AG04449 (cell line): ENCODE measurements at regions of chr2 and their contacts with region 1.

Region 1: GRCh38 chr2:11129598-11130449 is 25.4 kb upstream of the SLC66A3 start:
- DNase-seq: no peak
- H3K4me3 ChIP-seq: peak overlapping the region; percentile 39
- CTCF ChIP-seq: no peak

Region 2: DNA sequence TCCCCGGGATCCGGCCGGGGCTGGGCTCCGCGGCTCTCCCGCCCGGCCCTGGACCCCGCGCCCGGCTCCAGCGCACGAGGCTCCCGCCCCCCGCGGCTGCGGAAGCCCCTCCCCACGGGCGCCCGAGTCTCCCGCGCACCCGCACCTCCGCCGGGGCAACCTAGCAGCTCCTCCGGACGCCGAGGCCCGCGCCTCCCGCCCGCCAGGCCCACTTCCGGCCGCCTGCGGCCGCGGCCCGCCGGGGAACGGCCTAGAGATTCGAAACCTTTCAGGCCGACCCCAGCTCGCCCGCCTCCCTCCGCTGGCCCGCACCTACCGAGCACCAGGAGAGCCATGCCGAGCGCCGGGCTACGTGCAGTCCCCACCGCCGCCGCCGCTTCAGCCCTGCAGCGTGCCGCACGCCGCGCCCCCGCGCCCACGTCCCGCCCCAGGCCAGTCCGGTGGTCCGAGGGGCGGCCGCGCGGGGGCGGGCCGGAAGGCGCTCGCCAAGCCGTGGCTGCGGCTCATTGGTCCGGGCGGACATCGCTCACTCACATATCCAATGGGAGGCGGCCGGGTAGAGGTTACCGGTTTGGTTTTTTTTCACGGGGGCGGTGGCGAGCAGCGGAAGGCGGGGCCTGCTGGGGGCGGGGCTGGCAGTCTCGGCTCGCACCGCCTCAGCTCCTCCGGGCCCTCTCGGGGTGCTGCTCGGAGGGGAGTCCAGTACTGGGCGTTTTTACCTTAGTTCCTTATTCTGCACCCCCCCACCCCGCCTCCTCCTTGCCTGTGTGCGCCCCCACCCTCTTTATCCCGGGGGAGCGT is 317.3 kb before region 1 on chr2 and contains the start of gene PDIA6:
- CTCF ChIA-PET with region 1: interaction called, 11 read pairs
- POLR2A ChIA-PET with region 1: no interaction called
- DNase-seq: peak; percentile 62
- H3K4me3 ChIP-seq: peak within 1 kb of the TSS; percentile 74
- CTCF ChIP-seq: no peak

Region 3: DNA sequence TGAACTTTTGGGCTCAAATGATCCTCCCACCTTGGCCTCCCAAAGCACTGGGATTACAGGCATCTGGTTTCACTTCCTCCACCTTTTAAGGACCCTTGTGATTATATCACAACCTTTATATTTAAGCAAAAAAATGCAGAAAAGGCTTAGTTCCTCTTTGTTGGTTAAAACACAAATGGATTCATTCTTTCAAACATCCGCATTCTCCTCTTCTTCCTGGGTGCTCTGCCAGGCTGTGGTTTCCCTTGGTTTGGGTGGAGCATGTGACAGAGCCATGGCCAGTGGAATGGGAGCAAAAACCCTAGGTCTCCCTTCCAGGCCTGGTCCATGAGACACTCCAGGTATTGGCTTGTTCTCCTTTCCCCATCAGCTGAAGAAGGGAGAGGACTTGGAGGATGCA is 15.5 kb after region 1 on chr2:
- CTCF ChIA-PET with region 1: interaction called, 53 read pairs
- POLR2A ChIA-PET with region 1: interaction called, 3 read pairs
- DNase-seq: no peak
- H3K4me3 ChIP-seq: no peak overlapping the region
- CTCF ChIP-seq: no peak

Region 4: GRCh38 chr2:11203480-11203879 is 73.7 kb after region 1 on chr2:
- CTCF ChIA-PET with region 1: interaction called, 29 read pairs
- POLR2A ChIA-PET with region 1: no interaction called
- DNase-seq: no peak
- H3K4me3 ChIP-seq: no peak overlapping the region
- CTCF ChIP-seq: no peak

Region 5: GRCh38 chr2:11375025-11375688 is 245.3 kb after region 1 on chr2:
- CTCF ChIA-PET with region 1: interaction called, 12 read pairs
- POLR2A ChIA-PET with region 1: no interaction called
- DNase-seq: no peak
- H3K4me3 ChIP-seq: no peak overlapping the region
- CTCF ChIP-seq: no peak

Region 6: GRCh38 chr2:11457935-11458334 is 328.1 kb after region 1 on chr2:
- CTCF ChIA-PET with region 1: interaction called, 19 read pairs
- POLR2A ChIA-PET with region 1: no interaction called
- DNase-seq: no peak
- H3K4me3 ChIP-seq: no peak overlapping the region
- CTCF ChIP-seq: no peak

Region 7: DNA sequence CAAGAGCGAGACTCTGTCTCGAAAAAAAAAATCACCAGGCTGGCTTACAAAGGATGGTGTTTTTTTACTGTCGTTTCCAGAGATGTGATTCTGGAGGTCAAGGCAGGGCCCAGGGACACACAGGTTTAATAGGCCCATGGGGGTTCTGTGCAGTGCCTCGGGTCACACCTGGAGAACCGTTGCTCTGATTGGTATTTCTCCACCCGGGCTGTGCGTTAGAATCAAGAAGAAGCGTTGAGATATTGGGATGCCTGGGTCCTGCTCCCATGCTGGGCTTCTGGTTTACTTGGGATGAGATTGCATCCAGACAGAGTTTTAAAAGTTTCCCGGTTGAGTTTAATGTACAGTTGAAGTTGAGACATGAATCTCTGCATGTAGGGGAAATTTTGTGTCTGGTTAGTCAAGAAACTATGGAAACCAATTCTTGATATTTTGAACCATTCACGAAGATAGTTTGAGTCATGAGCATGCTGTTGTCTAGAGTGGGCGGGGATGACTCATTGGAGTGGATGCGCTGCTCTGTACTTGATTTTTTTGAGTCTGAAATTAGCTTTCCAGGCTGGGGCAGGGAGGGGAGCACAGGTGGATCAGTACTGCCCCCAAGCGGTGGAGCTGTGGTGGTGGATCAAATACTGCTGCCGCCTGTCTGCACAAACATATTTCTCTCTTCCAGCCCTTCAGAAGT is 454.2 kb after region 1 on chr2:
- CTCF ChIA-PET with region 1: interaction called, 209 read pairs
- POLR2A ChIA-PET with region 1: no interaction called
- DNase-seq: peak; percentile 83
- H3K4me3 ChIP-seq: no peak overlapping the region
- CTCF ChIP-seq: peak; percentile 91